HEK293 (cell line): ENCODE measurements at regions of chr17 and their contacts with region 1.

Region 1: GRCh38 chr17:7045909-7046724 is 2.2 kb upstream of the SLC16A11 start:
- H3K4me3 ChIP-seq: peak overlapping the region; percentile 0
- H3K27ac ChIP-seq: peak overlapping the region; percentile 34; the same call in 1 of the 2 replicates
- H3K4me1 ChIP-seq: peaks cover 6% of the 10 kb centered on the region; the same call in 1 of the 2 replicates
- CTCF ChIP-seq: peak; percentile 76

Region 2: DNA sequence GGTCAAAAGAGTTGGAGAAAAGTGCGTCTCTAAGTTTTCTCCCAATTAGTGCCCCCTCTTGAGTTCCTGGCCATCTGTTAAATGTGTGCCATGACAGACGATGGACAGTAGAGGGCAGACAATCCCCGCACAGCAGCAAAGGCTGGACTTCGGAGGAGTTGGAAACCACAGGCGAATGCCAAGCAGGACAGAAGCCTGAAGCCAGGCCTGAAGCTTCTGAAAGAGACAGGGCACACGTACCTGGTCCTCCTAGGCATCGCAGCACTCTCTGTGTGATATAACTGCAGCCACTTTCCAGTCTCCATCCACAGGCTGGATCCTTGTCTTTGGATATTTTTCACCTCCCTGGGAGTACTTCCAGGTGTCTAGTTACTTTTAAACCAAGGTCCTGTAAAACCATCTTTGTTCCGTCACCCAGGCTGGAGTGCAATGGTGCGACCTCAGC is 380.0 kb before region 1 on chr17:
- CTCF ChIA-PET with region 1: interaction called, 11 read pairs
- POLR2A ChIA-PET with region 1: no interaction called
- H3K4me3 ChIP-seq: no peak overlapping the region
- H3K27ac ChIP-seq: no peak overlapping the region
- H3K4me1 ChIP-seq: no peaks in the 10 kb centered on the region
- CTCF ChIP-seq: peak; percentile 86

Region 3: DNA sequence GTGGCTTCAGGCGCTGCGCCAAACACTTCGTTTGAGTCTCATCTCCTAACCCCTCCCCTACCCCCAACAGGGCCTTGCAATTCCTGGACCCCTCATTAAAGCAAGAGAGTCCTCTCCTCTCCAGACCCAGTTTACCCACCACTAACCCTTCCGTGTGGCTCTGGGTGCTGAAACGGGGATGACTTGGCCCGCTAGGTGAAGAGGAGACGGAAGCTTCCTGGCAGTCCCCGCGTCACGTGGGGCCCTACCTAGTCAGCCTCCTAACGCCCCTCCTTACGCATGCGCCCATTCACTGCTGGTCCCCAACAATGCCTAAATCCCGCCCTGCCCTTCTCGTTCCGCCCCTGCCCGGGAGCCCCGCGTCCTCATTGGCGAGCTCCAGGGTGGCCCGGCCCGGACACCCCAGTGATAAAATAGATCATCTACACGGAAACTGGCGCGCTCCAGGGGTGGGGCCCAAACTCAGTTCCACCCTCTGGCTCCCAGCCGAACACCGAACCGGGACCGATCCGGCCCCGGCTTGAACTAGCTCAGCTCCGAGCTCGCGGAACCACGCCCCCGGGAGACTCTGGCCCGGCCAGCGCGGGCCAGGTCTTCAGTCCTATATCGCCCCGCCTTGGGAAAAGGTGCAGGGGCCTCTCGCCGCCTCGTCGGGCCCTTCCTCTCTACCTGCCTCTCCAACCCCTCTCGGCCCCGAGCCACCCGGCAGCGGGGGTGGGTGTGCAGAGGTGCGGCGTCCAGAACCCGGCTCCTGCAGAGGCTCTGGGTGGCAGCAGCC is 10.3 kb before region 1 on chr17 and contains the start of gene SLC16A13:
- CTCF ChIA-PET with region 1: interaction called, 33 read pairs
- POLR2A ChIA-PET with region 1: interaction called, 21 read pairs
- H3K4me3 ChIP-seq: peak within 1 kb of the TSS; percentile 79
- H3K27ac ChIP-seq: peak within 1 kb of the TSS; percentile 62
- H3K4me1 ChIP-seq: 0 out of 2 replicates have a peak, but pooled peaks cover 2% of the 10 kb centered on the region
- CTCF ChIP-seq: 0 out of 2 replicates have a peak, but pooled peaks have one; percentile 24

Region 4: GRCh38 chr17:7136266-7136877 is 90.3 kb after region 1 on chr17:
- CTCF ChIA-PET with region 1: interaction called, 388 read pairs
- POLR2A ChIA-PET with region 1: interaction called, 10 read pairs
- H3K4me3 ChIP-seq: no peak overlapping the region; the same call in 1 of the 2 replicates
- H3K27ac ChIP-seq: no peak overlapping the region
- H3K4me1 ChIP-seq: no peaks in the 10 kb centered on the region
- CTCF ChIP-seq: peak; percentile 44; the same call in 1 of the 2 replicates

Region 5: GRCh38 chr17:7177196-7177953 is 131.3 kb after region 1 on chr17:
- CTCF ChIA-PET with region 1: interaction called, 50 read pairs
- POLR2A ChIA-PET with region 1: interaction called, 14 read pairs
- H3K4me3 ChIP-seq: peak overlapping the region; percentile 54
- H3K27ac ChIP-seq: peak overlapping the region; percentile 39; the same call in 1 of the 2 replicates
- H3K4me1 ChIP-seq: peaks cover 8% of the 10 kb centered on the region
- CTCF ChIP-seq: peak; percentile 88

Region 6: DNA sequence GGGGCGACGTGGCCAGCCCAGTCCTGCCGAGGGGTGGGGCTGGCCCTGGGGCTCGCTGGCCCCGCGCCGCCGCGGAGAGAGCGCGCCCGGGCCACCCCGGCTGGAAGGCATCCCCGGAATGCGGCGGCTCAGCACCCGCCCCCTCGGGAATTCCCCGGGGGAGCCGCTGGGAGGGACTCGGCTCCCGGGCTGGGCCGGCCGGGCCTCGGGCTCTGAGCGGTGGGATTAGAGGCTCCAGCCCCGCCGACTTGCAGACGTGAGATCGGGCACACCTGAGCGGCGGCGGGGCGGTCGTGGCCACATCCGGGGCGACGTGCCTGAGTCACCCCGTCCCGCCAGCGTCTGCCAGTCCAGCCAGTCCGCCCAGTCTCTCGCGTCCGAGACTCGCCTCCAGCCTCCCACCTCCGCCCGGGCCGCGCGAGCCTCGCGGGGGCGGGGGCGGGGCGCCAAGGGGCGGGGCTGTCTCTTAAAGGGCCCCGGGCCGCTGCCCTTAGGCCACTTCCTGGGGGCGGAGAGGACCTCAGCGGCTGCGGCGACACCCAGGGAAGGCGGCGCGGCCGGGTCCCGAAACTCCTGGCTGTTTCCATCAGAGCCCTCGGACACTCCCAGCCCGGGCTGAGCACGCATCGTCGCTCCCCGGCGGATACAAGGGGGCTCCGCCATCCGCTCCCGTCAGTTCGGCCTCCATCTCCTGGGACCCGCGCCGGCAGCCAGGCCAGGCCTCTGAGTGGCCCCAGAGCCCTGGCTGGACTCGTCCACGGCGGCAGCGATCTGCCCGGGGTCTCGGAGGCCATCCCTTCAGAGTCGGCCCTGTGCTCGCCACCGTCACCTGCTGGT is 305.8 kb after region 1 on chr17 and contains the start of gene KCTD11:
- CTCF ChIA-PET with region 1: interaction called, 29 read pairs
- POLR2A ChIA-PET with region 1: interaction called, 4 read pairs
- H3K4me3 ChIP-seq: peak within 1 kb of the TSS; percentile 70
- H3K27ac ChIP-seq: peak within 1 kb of the TSS; percentile 90
- H3K4me1 ChIP-seq: peaks cover 14% of the 10 kb centered on the region
- CTCF ChIP-seq: peak; percentile 85